A549 (cell line): ENCODE measurements at regions of chr1 and their contacts with region 1.

Region 1: GRCh38 chr1:161098210-161099068 is at the start of gene KLHDC9:
- DNase-seq: peak; percentile 64 to 75
- ATAC-seq: peak; percentile 73 to 78
- H3K4me3 ChIP-seq: peak within 1 kb of the TSS; percentile 41
- H3K27ac ChIP-seq: peak within 1 kb of the TSS; percentile 59 to 86
- H3K4me1 ChIP-seq: peaks cover 11% of the 10 kb centered on the region; the same call in 2 of the 3 replicates
- CTCF ChIP-seq: no peak
- EP300 ChIP-seq: no peak
- POLR2A ChIP-seq: no peak
- RAD21 ChIP-seq: no peak
- polyA plus RNA-seq, gene KLHDC9: 3.6 and 4.6 TPM in 2 replicates

Region 2: DNA sequence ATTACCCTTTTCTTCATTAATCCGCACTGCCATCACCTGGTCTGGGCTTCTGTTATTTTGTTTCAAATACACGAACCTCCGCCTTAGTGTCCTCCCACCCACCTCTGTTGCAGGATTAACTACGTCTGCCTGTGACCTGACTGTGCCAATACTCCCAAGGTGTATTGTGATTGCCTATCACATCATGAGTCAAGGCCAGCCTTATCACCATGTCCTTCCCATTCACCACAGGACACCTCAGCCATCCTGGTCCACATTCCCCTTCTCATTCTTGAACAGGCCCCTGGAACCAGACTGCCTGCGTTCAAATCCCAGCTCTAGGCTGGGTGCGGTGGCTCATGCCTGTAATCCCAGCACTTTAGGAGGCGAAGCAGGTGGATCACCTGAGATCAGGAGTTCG is 91.9 kb before region 1 on chr1:
- CTCF ChIA-PET with region 1: interaction called, 176 read pairs
- POLR2A ChIA-PET with region 1: interaction called, 3 read pairs
- DNase-seq: no peak
- ATAC-seq: no peak
- H3K4me3 ChIP-seq: no peak overlapping the region
- H3K27ac ChIP-seq: peak overlapping the region in 1 of 2 experiments; percentile 19; a peak in 1 of 6 replicates
- H3K4me1 ChIP-seq: peaks cover 18% of the 10 kb centered on the region
- CTCF ChIP-seq: no peak
- EP300 ChIP-seq: no peak
- POLR2A ChIP-seq: no peak
- RAD21 ChIP-seq: no peak

Region 3: DNA sequence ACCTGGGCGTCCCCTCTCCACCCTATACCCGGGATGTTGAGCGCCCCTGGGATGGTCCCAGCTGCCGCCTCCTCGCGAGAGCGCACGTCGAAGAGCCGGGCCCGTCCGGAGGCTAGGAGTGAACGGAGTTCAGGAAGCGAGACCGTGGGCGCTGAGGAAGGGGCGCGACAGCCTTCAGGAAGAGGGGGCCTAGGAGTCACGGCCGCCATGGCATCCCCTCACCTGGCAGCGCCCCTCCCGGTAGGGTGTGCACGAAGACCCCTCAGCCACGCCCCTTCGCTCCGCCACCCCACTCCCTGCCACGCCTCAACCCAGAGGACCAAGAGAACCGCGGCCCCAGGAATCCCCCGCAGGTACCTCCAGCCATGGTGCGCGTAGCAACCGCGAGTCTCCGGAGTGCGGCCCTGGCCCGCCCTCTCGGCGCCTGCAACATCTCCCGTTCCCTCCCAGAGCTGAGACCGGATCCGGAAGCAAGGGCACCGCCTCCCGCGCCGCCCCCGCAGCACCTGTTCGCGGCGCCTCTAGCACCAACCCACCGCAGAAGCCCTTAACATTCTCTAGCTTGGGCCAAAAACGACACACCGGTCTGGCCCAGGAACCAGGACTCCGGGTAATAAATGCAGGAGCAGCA is 59.8 kb before region 1 on chr1 and contains the start of gene TSTD1:
- CTCF ChIA-PET with region 1: interaction called, 42 read pairs
- POLR2A ChIA-PET with region 1: no interaction called
- DNase-seq: no peak
- ATAC-seq: no peak
- H3K4me3 ChIP-seq: no peak within 1 kb of the TSS
- H3K27ac ChIP-seq: no peak within 1 kb of the TSS
- H3K4me1 ChIP-seq: no peaks in the 10 kb centered on the region
- CTCF ChIP-seq: no peak
- EP300 ChIP-seq: no peak
- POLR2A ChIP-seq: no peak
- RAD21 ChIP-seq: no peak
- polyA plus RNA-seq, gene TSTD1: not detected in 2 replicates

Region 4: DNA sequence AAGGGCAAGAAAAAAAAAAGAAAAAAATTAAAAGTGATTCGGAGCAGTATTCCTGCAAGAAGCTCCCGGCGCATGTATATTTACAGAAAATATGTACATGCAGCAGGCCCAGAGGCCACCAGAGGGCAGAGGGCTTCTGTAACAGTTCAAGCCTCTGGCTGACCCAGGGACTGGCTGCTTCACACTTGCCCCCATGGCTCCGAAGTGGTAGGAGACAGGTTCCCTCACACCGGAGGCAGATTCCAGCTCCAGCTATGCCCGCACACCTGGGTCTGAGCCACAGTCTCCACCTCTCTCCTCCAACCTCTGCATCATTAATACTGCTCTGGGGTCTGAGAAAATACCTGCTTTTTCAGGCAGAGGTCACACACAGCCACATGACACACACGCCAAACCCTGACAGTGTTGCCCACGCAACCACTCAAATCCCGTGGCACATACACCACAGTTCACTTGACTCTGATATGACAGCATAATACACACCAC is 26.5 kb before region 1 on chr1:
- CTCF ChIA-PET with region 1: interaction called, 319 read pairs
- POLR2A ChIA-PET with region 1: no interaction called
- DNase-seq: peak; percentile 70 to 72
- ATAC-seq: peak; percentile 77 to 83
- H3K4me3 ChIP-seq: no peak overlapping the region
- H3K27ac ChIP-seq: peak overlapping the region in 1 of 2 experiments; percentile 51; a peak in 2 of 6 replicates
- H3K4me1 ChIP-seq: peaks cover 27% of the 10 kb centered on the region
- CTCF ChIP-seq: peak; percentile 75
- EP300 ChIP-seq: no peak
- POLR2A ChIP-seq: no peak
- RAD21 ChIP-seq: peak; percentile 73 to 81

Region 5: GRCh38 chr1:161132410-161133219 is 34.2 kb after region 1 on chr1 and contains the start of gene DEDD:
- CTCF ChIA-PET with region 1: interaction called, 16 read pairs
- POLR2A ChIA-PET with region 1: interaction called, 5 read pairs
- DNase-seq: peak; percentile 94 to 99
- ATAC-seq: peak; percentile 93 to 95
- H3K4me3 ChIP-seq: peak within 1 kb of the TSS; percentile 67
- H3K27ac ChIP-seq: peak within 1 kb of the TSS; percentile 93 to 95
- H3K4me1 ChIP-seq: peaks cover 20% of the 10 kb centered on the region
- CTCF ChIP-seq: no peak
- EP300 ChIP-seq: no peak
- POLR2A ChIP-seq: peak; percentile 35
- RAD21 ChIP-seq: no peak; a peak in 1 of 5 replicates
- polyA plus RNA-seq, gene DEDD: 35.9 and 38.4 TPM in 2 replicates